Right ventricle myocardium inferior (tissue), 1 donor: ENCODE measurements at regions of chr1 and their contacts with region 1.

Region 1: GRCh38 chr1:165630629-165631341 is at the start of gene MGST3:
- DNase-seq: peak; percentile 99
- ATAC-seq: peak; percentile 98
- total RNA-seq, gene MGST3: 628 TPM

Region 2: GRCh38 chr1:165603810-165604209 is 27.0 kb before region 1 on chr1:
- intact Hi-C with region 1: loop called (anchors 2 kb)
- DNase-seq: no peak
- ATAC-seq: no peak

Region 3: DNA sequence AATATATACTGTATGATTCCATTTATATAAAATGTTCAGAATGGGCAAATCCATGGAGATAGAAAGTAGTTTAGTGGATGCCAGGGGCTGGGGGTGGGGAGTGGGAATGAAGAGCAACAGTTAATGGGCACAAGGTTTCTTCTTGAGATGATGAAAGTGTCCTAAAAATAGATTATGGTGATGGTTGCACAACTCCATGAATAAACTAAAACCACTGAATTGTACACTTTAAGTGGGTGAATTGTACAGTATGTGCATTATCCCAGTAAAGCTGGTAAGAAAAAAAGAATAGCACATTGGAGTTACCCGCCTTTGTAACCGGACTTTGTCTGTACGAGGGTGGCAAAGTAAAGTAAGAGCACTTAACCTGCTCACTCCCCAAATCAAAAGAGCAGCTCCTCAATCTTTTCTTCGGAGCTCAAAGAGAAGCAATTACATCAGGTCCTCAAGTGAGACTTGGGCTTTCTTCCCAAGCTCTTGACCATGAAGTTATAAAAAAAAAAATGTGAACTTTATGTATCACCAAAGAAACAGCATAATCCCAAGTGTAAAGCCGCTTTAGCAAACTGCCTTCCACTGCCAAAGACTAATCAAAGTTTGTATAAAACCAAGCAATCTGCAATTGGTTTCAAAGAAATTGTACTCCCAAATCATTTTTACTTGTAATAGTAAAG is 35.5 kb after region 1 on chr1:
- intact Hi-C with region 1: no loop called
- DNase-seq: no peak
- ATAC-seq: no peak

Region 4: DNA sequence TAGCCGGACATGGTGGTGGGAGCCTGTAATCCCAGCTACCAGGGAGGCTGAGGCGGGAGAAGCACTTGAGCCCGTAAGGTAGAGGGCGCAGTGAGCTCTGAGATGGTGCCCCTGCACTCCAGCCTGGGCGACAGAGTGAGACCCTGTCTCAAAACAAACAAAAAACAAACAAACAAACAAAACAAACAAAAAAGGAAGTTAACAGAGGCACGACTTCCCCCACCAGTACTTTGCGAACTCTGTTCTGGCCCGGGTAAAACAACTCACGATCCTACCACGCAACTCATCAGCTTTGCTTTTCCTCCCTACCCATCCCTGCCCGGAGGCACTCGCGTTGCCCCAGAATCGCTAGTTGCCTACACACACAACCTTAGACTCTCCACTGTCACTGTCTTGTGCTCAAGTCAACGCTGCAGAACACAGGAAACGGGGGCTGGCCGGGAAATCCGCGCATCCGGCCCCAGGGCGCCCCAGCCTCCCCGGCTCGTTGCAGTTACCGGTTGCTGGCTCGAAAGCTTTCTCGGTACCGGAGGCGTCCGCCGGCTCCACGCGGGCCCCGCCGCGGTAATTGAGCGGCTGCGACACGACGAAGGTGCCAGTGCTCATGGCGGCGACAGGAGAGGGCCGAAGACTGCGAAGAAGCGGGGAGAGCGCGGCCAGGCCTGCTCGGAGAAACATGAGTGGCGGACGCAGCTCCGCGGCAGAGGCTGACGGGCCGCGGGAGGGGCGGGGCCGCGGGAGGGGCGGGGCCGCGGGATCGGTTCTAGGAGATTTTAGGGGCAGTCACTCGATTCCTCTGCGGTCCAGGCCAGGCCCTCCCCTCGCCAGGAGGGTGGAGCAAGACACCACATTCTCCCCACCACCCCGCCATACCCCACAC is 67.3 kb after region 1 on chr1 and contains the start of gene ALDH9A1:
- intact Hi-C with region 1: loop called (anchors 2 kb)
- DNase-seq: peak; percentile 95
- ATAC-seq: peak; percentile 98
- total RNA-seq, gene ALDH9A1: 57.3 TPM